Colonic mucosa (tissue), 4 donors: ENCODE measurements at regions of chr1 and their contacts with region 1.

Region 1: DNA sequence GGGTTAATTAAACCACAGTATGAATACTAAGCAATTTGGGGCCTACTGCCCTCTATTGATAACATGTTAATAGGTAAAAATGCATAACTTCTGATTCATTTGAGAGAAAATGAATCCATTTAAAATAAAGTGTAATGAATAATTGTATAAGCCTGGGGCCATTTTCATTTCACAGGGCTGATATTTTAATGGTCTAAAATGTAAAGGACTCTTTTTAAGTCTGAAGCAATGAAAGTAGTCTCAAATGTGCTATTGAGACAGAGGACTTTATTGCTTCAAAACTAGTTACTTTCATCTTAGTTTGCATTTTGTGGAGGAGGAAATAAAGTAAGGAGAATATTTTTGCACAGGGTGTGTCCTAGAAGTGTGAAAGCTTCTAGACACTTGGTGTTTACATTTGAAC is 155.4 kb downstream of the TLR5 start:
- DNase-seq: no peak
- H3K4me3 ChIP-seq: no peak overlapping the region
- H3K27ac ChIP-seq: no peak overlapping the region
- H3K4me1 ChIP-seq: no peaks in the 10 kb centered on the region
- H3K27me3 ChIP-seq: no peaks in the 10 kb centered on the region
- CTCF ChIP-seq: no peak

Region 2: GRCh38 chr1:223006917-223007648 is 19.4 kb after region 1 on chr1:
- intact Hi-C with region 1: loop called (anchors 2 kb)
- DNase-seq: no peak
- H3K4me3 ChIP-seq: no peak overlapping the region
- H3K27ac ChIP-seq: no peak overlapping the region
- H3K4me1 ChIP-seq: no peaks in the 10 kb centered on the region
- H3K27me3 ChIP-seq: no peaks in the 10 kb centered on the region
- CTCF ChIP-seq: no peak